AG04449 (cell line): ENCODE measurements at regions of chr15 and their contacts with region 1.

Region 1: DNA sequence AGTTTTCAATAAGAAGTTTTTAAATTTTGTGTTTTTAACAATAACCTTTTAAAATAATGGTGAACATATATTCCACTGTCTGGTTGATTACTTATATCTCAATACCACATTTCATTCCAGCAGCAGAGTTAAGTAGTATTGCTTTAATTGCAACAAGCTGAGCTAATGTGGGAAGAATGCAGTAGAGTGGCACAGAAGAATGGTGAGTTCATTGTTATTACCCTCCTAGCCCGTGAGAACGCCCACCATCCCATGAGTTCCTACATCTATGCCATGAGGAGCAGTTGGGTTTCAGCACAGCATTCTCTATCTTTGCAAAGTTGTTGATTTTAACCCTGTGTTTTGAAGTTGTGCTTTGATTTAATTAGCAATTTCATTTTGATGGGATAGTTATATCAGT is 17.8 kb upstream of the NR2E3 start:
- DNase-seq: peak; percentile 52
- H3K4me3 ChIP-seq: no peak overlapping the region
- CTCF ChIP-seq: no peak

Region 2: DNA sequence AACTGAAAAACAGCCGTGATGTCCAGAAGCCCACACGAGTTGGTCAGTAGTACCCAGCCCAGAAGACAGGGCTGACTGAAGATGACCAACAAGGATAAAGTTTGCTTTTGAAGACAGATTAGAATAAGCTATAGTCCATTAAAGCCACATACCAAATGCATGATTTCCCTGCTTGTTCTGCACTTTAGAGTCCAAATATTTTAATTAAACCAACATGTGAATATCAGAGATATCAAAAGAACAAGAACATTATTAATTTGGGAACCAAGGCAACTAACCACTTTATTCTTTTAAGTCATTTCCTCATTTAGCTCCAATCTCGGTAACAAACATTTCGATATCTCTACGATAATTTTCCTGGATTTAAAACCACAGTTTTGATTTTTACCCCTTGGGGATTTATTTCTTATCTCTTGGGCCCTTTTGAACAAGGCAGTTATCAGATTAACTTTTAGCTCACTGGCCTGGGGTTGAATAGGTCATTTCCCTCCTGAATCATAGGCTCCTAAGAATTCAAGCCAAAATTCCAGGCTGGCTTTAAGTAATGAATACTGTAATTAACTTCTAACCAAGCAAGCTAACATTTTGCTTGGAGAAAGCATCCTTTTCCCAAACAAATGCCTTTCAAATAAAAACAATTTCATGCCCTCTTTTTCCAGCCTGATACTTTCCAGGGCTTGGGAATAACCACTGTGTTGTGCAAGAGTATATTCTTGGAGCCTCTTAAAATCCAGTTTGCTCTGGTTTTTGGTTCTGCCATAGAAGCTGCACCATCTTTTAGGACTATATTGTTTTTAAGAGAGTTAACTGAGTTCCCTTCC is 85.1 kb before region 1 on chr15:
- CTCF ChIA-PET with region 1: no interaction called
- POLR2A ChIA-PET with region 1: no interaction called
- DNase-seq: no peak
- H3K4me3 ChIP-seq: no peak overlapping the region
- CTCF ChIP-seq: no peak

Region 3: GRCh38 chr15:71780115-71780976 is 12.2 kb before region 1 on chr15:
- CTCF ChIA-PET with region 1: interaction called, 41 read pairs
- POLR2A ChIA-PET with region 1: interaction called, 5 read pairs
- DNase-seq: no peak
- H3K4me3 ChIP-seq: no peak overlapping the region
- CTCF ChIP-seq: peak; percentile 61

Region 4: GRCh38 chr15:71891026-71891425 is 98.5 kb after region 1 on chr15:
- CTCF ChIA-PET with region 1: no interaction called
- POLR2A ChIA-PET with region 1: no interaction called
- DNase-seq: no peak
- H3K4me3 ChIP-seq: no peak overlapping the region
- CTCF ChIP-seq: no peak